ENCODE measurements at regions of chr9 and their contacts with region 1.

Region 1: DNA sequence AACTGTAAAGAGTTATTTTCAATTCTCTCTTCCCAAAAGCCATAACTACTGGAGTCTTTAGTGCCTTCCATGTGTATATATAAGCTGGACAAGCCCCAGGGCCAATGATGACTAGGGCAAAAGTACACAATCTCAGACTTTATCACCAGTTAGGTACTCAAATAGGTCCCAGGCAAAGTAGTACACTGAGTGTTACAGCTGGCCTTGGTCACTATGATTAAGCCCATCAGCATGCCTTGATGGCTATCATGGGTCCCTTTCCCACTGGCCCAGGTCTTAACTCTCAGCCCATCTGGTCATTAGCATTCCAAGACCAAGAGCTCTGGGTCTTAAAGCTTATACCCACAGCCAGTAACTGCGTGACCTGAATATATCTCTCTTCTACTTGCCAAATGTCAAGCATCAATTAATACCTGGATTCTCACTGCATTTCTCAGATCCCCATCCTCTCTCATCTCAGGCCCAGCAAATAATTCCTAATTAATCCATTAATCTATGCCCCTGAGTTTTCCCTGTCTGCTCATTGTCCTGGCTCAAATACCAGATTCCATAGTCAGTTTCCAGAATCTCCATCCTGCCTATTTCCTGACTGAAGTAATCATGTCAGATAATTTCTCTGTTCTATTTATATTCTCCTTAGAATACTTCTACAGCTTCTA is 62.3 kb downstream of the NR6A1 start:
- DNase-seq: no peak
- H3K4me3 ChIP-seq: no peak overlapping the region
- H3K4me1 ChIP-seq: no peaks in the 10 kb centered on the region
- H3K27me3 ChIP-seq: no peaks in the 10 kb centered on the region

Region 2: DNA sequence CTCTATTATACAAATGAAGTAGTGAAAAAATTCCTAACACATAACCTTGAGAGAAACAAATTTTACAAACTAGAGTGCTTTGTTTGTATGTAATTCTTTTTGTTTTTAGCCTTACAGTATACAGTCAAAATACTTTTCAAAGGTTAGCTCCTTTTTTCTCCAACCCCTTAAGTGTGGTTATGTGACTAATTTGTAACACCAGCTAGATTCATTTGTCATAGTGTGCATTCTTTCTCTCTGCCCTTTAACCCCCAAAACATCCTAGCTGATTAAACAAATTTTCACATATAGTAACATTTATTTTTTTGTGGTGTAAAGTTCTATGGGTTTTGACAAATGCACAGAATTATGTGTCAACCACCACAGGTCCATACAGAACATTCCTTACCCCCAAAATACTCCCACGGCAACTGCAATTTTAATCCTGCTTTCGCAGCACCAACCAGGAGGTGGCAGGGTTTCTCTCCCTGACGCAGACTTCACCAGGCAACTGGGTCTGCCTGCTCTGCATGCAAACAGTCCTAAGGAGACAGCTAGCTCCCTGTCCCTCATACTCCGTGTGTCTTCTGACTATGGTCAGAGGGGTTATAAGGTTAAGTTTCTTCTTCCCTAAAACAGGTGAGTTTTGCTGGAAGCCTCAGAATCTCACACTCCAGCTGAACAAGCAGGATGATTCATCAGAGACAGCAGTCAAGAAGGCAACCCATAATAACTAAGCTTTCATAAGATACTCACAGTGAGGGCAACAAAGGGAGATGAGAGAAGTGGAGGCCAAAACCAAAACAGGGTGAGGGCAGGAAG is 157.1 kb before region 1 on chr9:
- in situ Hi-C with region 1: loop called (anchors 5 kb)
- DNase-seq: peak; percentile 74 to 81
- H3K4me3 ChIP-seq: no peak overlapping the region
- H3K4me1 ChIP-seq: no peaks in the 10 kb centered on the region
- H3K27me3 ChIP-seq: no peaks in the 10 kb centered on the region

Region 3: DNA sequence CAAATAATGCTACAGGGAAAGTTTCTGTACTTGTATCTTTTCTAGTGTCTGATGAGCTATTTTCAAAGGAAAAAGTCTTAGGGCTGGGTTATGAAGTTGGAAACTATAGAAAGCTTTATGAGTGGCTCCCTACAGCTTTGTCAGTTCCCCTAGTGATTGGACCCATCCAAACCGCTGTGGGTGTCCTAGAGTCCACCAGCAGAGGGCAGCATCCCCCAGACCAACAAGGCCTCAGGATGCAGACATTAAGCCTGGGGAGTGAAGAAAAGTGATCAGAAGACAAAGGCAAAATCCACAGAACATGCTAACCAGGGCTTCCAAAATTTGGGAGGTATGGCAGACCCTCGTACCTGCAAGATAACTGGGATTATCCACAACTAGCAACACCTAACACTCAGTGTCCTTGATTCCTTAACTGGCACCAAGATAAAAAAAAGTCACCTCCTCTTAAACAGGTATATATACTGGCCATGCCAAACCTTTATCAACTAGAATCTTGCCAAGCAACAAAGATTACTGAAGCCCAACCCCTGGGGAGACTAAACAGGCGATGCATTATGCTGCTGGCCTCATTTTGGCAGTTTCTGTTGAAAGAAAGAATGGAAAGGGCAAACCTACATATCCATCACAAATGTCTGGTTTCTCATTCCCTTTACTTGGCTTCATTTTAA is 91.2 kb before region 1 on chr9:
- in situ Hi-C with region 1: loop called (anchors 5 kb)
- DNase-seq: peak; percentile 65 to 90
- H3K4me3 ChIP-seq: no peak overlapping the region
- H3K4me1 ChIP-seq: peaks cover 48% of the 10 kb centered on the region
- H3K27me3 ChIP-seq: no peaks in the 10 kb centered on the region

Measured in HAP-1 (cell line).